ENCODE measurements at regions of chr6 and their contacts with region 1.

Region 1: GRCh38 chr6:158559895-158560835 is at the start of gene TMEM181:
- DNase-seq: peak; percentile 69
- ATAC-seq: peak; percentile 69
- H3K4me3 ChIP-seq: peak within 1 kb of the TSS; percentile 75 to 90 (median 89)
- H3K27ac ChIP-seq: peak within 1 kb of the TSS; percentile 82
- H3K4me1 ChIP-seq: peaks cover 87% of the 10 kb centered on the region
- H3K27me3 ChIP-seq: no peaks in the 10 kb centered on the region
- CTCF ChIP-seq: peak; percentile 54
- EP300 ChIP-seq: peak in 1 of 2 experiments; percentile 35; a peak in 1 of 4 replicates
- POLR2A ChIP-seq: peak in 1 of 2 experiments; percentile 58; a peak in 1 of 4 replicates
- RAD21 ChIP-seq: peak; percentile 44
- total RNA-seq, gene TMEM181: 42.1 and 59.1 TPM in 2 replicates

Region 2: GRCh38 chr6:158506577-158506976 is 53.6 kb before region 1 on chr6:
- CTCF ChIA-PET with region 1: no interaction called
- POLR2A ChIA-PET with region 1: no interaction called
- in situ Hi-C with region 1: no loop called
- intact Hi-C with region 1: loop called (anchors 1 kb)
- DNase-seq: peak; percentile 45
- ATAC-seq: peak; percentile 87
- H3K4me3 ChIP-seq: no peak overlapping the region
- H3K27ac ChIP-seq: no peak overlapping the region
- H3K4me1 ChIP-seq: peaks cover 10% of the 10 kb centered on the region
- H3K27me3 ChIP-seq: no peaks in the 10 kb centered on the region
- CTCF ChIP-seq: peak; percentile 41
- EP300 ChIP-seq: no peak
- POLR2A ChIP-seq: no peak
- RAD21 ChIP-seq: peak; percentile 63

Region 3: DNA sequence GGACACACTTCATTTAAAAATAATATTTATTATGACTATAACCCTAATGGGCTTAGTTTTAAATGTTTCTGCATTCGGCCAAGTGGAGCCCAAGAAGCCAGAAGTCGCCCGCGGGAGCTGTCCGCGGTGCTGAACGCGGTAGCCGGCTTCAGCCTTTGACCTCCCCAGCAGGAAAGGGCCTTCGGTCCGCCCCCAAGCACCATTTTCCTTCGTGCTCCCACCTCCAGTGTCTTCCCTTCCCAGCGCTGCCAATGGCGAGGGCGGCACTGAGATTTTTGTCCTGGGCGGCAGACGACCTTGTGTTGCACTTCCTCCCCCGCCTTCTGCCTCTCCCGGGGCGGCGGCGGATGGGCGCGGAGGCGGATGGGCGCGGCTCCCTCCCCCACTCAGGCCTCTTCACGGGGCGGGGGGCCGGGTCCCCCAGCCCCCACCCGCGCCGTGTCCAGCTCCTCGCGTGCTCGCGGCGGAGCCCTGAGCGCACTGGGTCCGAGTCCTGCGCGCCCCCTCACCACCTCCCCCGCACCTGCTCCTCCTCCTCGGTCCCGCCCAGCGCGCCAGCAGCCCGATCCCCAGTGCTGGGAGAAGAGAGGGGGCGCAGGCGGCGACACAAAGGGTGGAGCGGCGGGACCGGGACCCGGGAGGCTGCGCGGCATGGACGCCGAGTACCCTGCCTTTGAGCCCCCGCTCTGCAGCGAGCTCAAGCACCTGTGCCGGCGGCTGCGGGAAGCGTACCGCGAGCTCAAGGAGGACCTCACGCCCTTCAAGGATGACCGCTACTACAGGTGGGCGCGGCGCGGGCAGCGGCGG is 23.9 kb before region 1 on chr6:
- CTCF ChIA-PET with region 1: no interaction called
- POLR2A ChIA-PET with region 1: interaction called, 11 read pairs
- in situ Hi-C with region 1: no loop called
- intact Hi-C with region 1: loop called (anchors 2 kb)
- DNase-seq: peak; percentile 84
- ATAC-seq: peak; percentile 76
- H3K4me3 ChIP-seq: peak overlapping the region; percentile 70 to 95 (median 86)
- H3K27ac ChIP-seq: peak overlapping the region; percentile 58
- H3K4me1 ChIP-seq: peaks cover 37% of the 10 kb centered on the region
- H3K27me3 ChIP-seq: no peaks in the 10 kb centered on the region
- CTCF ChIP-seq: peak; percentile 50
- EP300 ChIP-seq: no peak
- POLR2A ChIP-seq: no peak; a peak in 1 of 4 replicates
- RAD21 ChIP-seq: 0 out of 2 replicates have a peak, but pooled peaks have one; percentile 9

Region 4: DNA sequence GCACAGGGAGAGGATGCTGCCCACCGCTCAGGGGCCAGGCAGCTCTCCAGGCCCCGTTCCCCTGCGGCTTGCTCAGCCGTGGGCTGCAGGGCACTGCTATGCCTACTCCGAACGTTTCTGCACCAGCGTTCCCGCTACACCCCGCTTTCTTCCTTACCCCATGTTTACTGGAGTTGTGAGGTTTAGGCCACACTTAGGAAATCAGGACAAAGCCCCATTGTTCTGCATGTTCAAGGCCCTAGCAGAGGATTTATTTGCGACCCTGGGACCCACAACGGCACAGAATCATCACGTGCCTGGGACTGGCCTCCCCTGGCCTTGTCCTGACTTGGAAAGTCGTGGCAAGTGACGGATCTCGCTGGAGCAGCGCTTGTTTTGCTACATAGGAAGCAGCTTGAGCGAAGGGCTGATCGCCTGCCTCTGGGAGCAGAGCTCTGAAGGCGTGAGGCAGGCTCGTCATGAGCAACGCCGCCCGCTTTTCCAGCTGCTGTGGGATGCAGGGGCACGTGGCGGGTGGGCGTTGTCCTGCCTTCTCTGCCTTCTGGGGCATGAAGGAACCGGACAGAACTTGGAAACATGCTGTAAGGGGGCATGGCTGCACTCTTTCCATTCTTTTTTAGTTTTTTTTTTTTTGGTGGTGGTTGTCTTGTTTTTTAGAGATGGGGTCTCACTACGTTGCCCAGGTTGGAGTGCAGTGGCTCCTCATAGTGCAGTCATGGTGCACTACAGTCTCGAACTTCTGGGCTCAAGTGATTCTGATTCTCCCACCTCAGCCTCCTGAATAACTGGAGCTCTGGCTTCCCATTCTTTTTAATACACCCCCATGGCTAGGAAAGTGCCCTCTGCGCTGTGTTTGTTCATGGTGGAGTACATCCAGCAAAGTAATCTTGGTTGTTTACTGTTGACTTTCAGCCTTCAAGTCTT is 14.9 kb before region 1 on chr6:
- CTCF ChIA-PET with region 1: no interaction called
- POLR2A ChIA-PET with region 1: interaction called, 12 read pairs
- in situ Hi-C with region 1: no loop called
- intact Hi-C with region 1: no loop called
- DNase-seq: peak; percentile 91
- ATAC-seq: peak; percentile 81
- H3K4me3 ChIP-seq: no peak overlapping the region
- H3K27ac ChIP-seq: peak overlapping the region; percentile 59
- H3K4me1 ChIP-seq: peaks cover 86% of the 10 kb centered on the region
- H3K27me3 ChIP-seq: no peaks in the 10 kb centered on the region
- CTCF ChIP-seq: 0 out of 2 replicates have a peak, but pooled peaks have one; percentile 4
- EP300 ChIP-seq: peak in 1 of 2 experiments; percentile 70; a peak in 2 of 4 replicates
- POLR2A ChIP-seq: peak in 1 of 2 experiments; percentile 39; a peak in 1 of 4 replicates
- RAD21 ChIP-seq: no peak

Region 5: GRCh38 chr6:158571826-158572652 is 11.9 kb after region 1 on chr6:
- CTCF ChIA-PET with region 1: no interaction called
- POLR2A ChIA-PET with region 1: interaction called, 29 read pairs
- in situ Hi-C with region 1: no loop called
- intact Hi-C with region 1: loop called (anchors 1 kb)
- DNase-seq: peak; percentile 94
- ATAC-seq: peak; percentile 95
- H3K4me3 ChIP-seq: peak overlapping the region in 2 of 3 experiments; percentile 33 to 60; a peak in 4 of 6 replicates
- H3K27ac ChIP-seq: peak overlapping the region; percentile 70
- H3K4me1 ChIP-seq: peaks cover 93% of the 10 kb centered on the region
- H3K27me3 ChIP-seq: no peaks in the 10 kb centered on the region
- CTCF ChIP-seq: peak; percentile 45
- EP300 ChIP-seq: peak in 1 of 2 experiments; percentile 61; a peak in 2 of 4 replicates
- POLR2A ChIP-seq: no peak
- RAD21 ChIP-seq: peak; percentile 77